PC-9 (cell line): ENCODE measurements at regions of chr9 and their contacts with region 1.

Region 1: GRCh38 chr9:21789541-21790037 is 12.8 kb upstream of the MTAP start:
- DNase-seq: peak; percentile 28 to 80
- H3K4me3 ChIP-seq: peak overlapping the region; percentile 46; the same call in 1 of the 2 replicates
- H3K27ac ChIP-seq: no peak overlapping the region
- H3K4me1 ChIP-seq: peaks cover 18% of the 10 kb centered on the region
- H3K27me3 ChIP-seq: no peaks in the 10 kb centered on the region
- CTCF ChIP-seq: peak; percentile 92

Region 2: DNA sequence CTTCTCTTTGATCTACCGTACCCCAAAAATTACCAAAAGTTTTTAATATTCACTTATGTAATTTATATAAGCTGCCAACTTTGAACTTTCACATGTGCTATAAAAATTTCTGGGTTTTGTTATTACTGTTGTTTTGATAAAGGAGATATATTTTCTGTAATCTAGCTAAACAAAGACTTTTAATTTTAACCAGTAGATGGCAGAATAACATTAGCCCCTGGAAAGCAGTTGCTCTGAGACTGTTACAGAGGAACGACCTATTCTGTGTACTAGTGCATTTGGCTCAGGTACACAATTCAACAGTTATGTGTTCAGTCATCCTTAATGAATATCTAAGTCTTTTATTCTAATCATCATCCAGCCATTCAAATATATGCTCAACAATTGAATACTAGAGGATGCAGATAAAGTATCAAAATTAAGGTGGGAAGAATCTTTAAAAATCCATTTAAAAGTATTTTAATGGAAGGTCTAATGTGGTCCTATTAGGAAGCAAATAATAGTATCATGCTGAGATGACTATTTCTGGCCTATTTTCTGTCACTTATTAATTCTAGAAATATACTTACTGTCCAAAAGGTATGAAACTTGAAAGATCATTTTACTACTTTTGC is 463.0 kb before region 1 on chr9:
- CTCF ChIA-PET with region 1: no interaction called
- POLR2A ChIA-PET with region 1: no interaction called
- intact Hi-C with region 1: loop called (anchors 1 kb)
- DNase-seq: no peak
- H3K4me3 ChIP-seq: no peak overlapping the region
- H3K27ac ChIP-seq: no peak overlapping the region
- H3K4me1 ChIP-seq: no peaks in the 10 kb centered on the region
- H3K27me3 ChIP-seq: no peaks in the 10 kb centered on the region
- CTCF ChIP-seq: peak; percentile 72

Region 3: GRCh38 chr9:21465859-21466518 is 323.6 kb before region 1 on chr9:
- CTCF ChIA-PET with region 1: interaction called, 7 read pairs
- POLR2A ChIA-PET with region 1: no interaction called
- intact Hi-C with region 1: loop called (anchors 1 kb)
- DNase-seq: peak; percentile 4 to 51
- H3K4me3 ChIP-seq: no peak overlapping the region
- H3K27ac ChIP-seq: no peak overlapping the region
- H3K4me1 ChIP-seq: no peaks in the 10 kb centered on the region
- H3K27me3 ChIP-seq: no peaks in the 10 kb centered on the region
- CTCF ChIP-seq: peak; percentile 71

Region 4: DNA sequence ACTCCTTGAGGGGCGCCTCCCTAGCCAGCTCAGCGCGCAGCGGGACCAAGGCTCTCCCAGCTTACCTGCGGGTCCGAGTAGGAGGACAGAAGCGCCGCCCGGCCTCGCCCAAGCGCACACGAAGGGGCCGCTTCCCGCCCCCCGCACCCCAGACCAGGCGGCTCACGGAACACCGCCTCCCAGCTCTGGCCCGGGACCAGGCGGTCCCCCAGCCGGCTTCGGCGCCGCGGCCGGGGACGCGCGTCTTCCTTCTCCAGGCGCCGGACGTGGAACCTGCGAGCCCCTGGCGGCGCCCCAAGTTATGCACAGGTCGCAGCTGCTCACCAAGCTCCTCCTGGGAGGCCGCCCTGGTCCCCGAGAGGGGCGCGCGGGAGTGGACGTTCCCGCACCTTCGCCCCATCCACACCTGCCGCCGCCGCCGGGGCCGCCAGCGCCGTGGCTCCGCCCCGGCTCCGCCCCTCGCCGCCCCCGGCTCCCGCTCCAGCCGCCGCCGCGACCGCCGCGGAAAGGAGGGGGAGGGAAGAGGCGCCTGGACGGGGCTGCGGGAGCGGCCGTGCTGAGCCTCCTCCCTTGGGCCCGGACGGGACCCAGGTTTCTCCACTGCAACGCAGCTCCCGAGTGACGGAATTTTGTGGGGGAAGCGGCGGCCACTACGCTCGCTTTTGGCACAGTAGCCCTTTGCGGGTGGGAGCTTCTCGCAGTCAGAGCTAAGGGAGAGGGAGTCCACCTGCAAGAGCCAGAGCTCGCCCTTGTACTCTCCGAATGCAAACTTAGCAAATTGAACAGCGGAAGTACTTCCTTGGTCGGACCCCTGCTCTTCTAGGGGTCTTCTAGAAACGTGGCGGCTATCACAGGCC is 229.9 kb before region 1 on chr9:
- CTCF ChIA-PET with region 1: no interaction called
- POLR2A ChIA-PET with region 1: interaction called, 6 read pairs
- intact Hi-C with region 1: loop called (anchors 2 kb)
- DNase-seq: peak; percentile 68 to 83
- H3K4me3 ChIP-seq: peak overlapping the region; percentile 80
- H3K27ac ChIP-seq: peak overlapping the region; percentile 77
- H3K4me1 ChIP-seq: peaks cover 9% of the 10 kb centered on the region; the same call in 1 of the 2 replicates
- H3K27me3 ChIP-seq: no peaks in the 10 kb centered on the region
- CTCF ChIP-seq: no peak

Region 5: DNA sequence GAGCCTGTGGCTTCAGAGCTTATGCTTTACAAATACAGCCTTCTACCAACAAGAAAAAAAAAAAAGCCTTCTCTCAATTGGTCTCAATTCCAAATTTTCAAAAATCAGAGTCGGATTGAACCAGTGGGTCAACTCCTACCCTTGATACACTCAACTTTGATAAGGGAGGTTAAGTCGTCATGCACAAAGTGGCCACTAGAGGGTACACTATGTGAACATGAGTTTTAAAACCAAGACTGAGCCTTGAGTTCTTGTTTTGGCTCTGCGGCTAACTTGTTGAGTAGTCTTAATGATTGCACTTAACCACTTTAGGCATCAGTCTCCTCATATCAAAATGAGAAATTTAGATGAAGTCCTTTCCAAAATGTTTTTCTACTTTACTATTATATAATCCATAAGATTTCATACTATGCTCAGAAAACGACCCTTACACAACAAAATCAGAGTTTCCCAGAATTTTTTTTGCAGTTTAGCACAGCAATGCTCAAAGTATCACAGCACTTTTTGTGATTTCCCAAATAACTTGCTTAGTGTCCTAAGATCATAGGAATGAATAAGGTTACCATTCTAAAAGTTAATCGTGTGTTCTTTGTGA is 80.0 kb before region 1 on chr9:
- CTCF ChIA-PET with region 1: interaction called, 3 read pairs
- POLR2A ChIA-PET with region 1: no interaction called
- intact Hi-C with region 1: loop called (anchors 2 kb)
- DNase-seq: no peak
- H3K4me3 ChIP-seq: no peak overlapping the region
- H3K27ac ChIP-seq: no peak overlapping the region
- H3K4me1 ChIP-seq: no peaks in the 10 kb centered on the region
- H3K27me3 ChIP-seq: no peaks in the 10 kb centered on the region
- CTCF ChIP-seq: peak; percentile 81

Region 6: DNA sequence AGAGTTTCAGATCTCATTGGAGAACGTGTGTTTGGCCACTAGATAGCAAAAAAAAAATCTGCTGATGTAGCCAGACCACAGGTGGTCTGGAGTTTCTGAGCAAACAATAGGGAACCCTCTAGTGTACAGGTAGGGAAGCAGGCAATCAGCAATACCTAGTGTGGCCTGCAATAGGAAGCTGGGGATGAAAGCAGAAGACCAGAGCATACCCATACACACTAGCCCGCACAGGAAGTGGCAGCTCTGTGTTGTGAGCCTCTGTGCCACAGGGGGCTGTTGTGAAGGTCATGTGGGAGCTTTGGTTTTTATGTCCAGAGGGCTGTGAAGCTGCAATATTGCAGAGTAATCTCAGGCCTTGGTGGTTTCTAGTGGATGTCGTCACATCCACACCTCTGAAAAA is 94.1 kb after region 1 on chr9:
- CTCF ChIA-PET with region 1: no interaction called
- POLR2A ChIA-PET with region 1: no interaction called
- intact Hi-C with region 1: no loop called
- DNase-seq: no peak
- H3K4me3 ChIP-seq: no peak overlapping the region
- H3K27ac ChIP-seq: no peak overlapping the region
- H3K4me1 ChIP-seq: no peaks in the 10 kb centered on the region
- H3K27me3 ChIP-seq: no peaks in the 10 kb centered on the region
- CTCF ChIP-seq: no peak